Cardiac septum (tissue), 1 donor: ENCODE measurements at regions of chr15 and their contacts with region 1.

Region 1: DNA sequence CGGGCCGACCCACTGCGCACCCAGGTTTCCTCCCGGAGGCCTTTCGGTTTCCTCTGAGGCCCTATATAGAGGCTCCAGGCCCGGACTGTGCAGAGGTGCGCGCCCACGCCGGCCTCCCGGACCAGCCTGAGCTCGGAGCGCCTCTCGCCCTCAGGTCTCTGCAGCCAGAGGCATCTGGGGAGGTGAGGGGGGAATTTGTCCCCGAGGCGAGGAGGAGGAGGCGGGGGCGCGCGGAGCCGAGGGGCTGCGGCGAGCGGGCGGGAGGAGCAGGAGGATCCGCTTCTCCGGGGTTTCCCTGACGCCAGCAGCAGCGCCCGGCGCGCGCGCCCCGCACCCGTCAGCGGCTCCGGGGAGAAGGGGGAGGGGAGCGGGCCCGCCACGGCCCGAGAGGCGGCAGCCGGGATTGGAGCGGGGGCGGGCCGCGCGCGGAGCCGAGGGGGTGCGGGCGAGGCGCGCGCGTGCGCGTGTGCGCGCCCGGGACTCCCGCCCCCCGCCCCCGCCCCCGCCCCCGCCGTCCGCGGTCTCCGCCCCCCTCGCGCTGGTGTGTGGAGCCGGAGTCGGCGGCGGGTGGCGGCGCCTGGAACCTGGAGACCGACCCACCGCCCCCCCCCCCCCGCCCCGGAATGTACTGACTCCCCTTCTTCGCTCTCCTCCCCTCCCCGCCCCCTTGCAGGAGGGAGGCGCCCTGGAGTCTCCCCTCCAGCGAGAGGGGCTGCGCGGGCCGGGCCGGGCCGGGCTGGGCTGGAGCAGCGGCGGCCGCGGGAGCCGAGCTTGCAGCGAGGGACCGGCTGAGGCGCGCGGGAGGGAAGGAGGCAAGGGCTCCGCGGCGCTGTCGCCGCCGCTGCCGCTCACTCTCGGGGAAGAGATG is at the start of gene NEO1:
- DNase-seq: peak; percentile 86
- total RNA-seq, gene NEO1: 8.7 TPM

Region 2: DNA sequence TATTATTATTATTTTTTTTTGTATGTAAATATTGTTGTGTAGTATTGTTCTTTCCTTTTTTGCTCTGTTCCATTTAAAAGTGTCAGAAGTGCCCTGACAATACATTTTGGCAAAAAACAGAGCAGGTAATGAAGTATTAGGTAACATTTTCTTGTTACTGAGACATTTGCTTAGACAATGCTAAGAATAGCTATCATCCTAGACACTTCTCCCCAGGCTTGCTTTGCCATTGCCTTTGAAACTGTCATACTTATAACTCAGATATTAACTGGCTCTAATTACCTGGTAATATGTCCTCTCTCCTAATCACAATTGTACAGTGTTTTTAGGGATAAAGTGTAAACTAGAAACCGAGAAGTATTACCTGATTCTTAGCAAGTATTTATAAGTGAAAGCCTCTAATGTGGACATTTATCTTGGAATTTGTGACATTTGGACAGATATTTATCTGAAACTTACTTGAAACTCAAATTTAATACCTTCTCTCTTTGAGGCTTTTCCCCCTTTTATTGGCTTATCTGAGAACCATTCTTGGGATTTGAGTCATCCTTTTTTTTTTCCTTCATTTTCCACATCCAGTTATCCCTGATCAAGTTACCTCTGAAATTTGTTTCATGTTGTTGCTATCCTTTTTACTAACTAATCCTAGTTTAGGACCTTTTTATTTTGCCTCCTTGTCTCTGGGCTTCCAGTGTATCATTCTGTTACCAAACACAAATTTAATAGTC is 564.8 kb before region 1 on chr15:
- intact Hi-C with region 1: no loop called
- DNase-seq: no peak

Region 3: DNA sequence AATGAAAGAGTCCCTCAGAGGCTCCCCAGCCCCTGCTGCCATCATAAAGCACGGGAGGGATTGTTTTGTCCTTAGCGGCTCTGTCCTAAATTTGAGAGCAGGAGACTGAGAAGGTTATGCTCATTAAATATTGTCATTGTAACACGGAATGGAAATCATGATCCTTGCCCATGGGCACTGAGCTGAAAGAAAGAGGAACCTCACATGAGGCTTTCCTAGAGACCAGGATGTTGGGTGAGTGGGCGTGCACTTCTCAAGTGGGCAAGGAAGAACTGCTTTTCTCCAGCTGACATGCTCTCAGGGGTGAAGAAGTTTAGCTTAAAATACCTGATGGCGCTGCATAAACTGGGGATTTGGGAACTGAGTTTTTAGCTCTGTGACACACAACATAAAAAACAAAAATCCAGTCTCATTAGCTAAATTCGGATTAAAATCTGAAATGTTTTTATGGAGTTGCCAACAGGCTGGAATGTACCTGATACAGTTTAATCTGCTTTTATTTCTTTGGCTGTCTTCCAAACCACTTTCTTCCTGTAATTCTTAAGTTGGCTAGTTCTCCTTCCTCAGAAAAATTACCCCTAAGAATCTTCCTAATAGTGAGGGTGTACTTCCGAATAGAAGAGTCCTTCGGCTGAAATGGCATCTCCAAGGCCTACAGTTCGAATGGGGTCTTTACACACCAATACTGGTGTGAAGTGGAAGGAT is 300.1 kb before region 1 on chr15:
- intact Hi-C with region 1: no loop called
- DNase-seq: no peak

Region 4: DNA sequence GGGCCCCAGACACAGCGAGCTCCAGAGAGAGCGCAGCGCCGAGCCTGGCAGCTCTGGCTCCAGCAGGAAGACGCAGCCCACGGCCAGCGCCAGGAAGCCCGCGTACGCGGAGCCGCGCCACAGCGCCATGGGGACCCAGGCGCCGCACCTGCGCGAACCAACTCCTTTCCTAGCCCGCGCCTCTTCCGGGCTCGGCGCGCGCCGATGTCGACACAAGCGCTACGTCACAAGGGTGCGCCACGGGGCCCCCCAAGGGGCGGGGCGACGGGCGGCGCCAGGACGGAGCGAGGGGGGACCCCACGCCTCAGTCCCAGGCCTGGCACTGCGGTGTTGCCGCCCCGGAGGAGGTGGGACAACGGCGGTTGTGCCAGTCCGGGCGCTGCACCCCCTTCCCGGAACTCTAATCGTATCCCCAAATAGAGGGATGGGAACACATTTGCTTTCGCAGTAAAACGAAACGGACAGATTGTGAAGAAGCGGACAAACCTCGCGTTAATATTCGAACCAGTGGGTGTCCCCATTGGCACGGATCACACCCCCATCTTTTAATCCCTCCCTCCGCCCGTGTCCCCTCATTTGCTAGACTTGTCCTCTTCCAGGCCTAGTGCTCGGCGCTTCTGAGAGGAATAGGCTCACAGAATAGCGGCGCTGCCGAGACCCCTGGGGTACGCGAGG is 268.3 kb before region 1 on chr15 and contains the start of gene ADPGK:
- intact Hi-C with region 1: loop called (anchors 5 kb)
- DNase-seq: peak; percentile 94
- total RNA-seq, gene ADPGK: 11.1 TPM